ENCODE measurements at regions of chr6 and their contacts with region 1.

Region 1: GRCh38 chr6:41697861-41698781 is 37.3 kb downstream of the TFEB start:
- DNase-seq: peak; percentile 98
- ATAC-seq: peak; percentile 87
- H3K4me3 ChIP-seq: no peak overlapping the region
- H3K27ac ChIP-seq: peak overlapping the region; percentile 65
- H3K4me1 ChIP-seq: peaks cover 12% of the 10 kb centered on the region
- H3K27me3 ChIP-seq: no peaks in the 10 kb centered on the region; the same call in 1 of the 2 replicates
- CTCF ChIP-seq: no peak
- POLR2A ChIP-seq: peak; percentile 39
- RAD21 ChIP-seq: peak; percentile 19; the same call in 1 of the 2 replicates

Region 2: DNA sequence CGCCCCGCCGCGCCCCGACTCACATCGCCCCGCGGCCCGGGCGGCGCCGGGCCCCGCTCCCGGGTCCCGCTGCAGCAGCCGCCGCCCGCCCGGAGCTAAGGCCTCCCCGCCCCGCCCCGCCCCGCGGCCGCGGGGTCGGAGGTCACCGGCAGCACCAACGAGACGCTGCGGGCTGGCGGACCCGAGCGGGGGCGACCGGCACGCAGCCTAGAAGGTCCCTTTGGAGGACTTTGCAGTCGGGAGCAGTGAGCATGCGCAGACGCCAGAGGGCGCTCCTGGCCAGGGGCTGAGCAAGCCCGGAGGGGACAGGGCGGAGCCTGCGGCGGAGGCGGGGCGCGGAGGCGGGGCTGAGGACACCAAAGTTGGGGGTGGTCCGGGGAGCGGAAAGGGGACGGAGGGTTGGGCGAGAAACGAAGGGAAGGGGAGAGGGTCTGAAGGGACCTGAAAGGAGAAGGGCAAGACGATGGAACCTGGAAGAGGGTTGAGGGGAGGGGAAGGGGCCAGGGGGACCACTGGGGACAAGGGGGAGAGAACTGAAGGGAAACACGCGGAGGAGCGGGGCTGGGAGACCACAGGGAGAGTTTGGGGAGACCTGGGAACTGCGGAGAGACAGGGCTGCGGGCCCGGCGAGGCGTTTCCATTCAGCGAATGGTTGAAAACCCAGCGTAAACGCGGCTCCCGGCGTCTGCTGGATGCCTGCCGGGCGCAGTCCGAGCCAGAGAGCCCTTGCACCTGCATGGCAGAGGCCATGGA is 81.8 kb after region 1 on chr6 and contains the start of gene FRS3:
- CTCF ChIA-PET with region 1: interaction called, 3 read pairs
- POLR2A ChIA-PET with region 1: no interaction called
- dilution Hi-C with region 1: no loop called
- in situ Hi-C with region 1: no loop called
- intact Hi-C with region 1: loop called (anchors 5 kb)
- DNase-seq: peak; percentile 92
- ATAC-seq: peak; percentile 95
- H3K4me3 ChIP-seq: peak within 1 kb of the TSS; percentile 54
- H3K27ac ChIP-seq: peak within 1 kb of the TSS; percentile 38
- H3K4me1 ChIP-seq: peaks cover 9% of the 10 kb centered on the region
- H3K27me3 ChIP-seq: no peaks in the 10 kb centered on the region
- CTCF ChIP-seq: peak; percentile 97
- POLR2A ChIP-seq: no peak
- RAD21 ChIP-seq: peak; percentile 94
- total RNA-seq, gene FRS3: 0.28 and 0.54 TPM in 2 replicates